ENCODE measurements at regions of chr3 and their contacts with region 1.

Region 1: DNA sequence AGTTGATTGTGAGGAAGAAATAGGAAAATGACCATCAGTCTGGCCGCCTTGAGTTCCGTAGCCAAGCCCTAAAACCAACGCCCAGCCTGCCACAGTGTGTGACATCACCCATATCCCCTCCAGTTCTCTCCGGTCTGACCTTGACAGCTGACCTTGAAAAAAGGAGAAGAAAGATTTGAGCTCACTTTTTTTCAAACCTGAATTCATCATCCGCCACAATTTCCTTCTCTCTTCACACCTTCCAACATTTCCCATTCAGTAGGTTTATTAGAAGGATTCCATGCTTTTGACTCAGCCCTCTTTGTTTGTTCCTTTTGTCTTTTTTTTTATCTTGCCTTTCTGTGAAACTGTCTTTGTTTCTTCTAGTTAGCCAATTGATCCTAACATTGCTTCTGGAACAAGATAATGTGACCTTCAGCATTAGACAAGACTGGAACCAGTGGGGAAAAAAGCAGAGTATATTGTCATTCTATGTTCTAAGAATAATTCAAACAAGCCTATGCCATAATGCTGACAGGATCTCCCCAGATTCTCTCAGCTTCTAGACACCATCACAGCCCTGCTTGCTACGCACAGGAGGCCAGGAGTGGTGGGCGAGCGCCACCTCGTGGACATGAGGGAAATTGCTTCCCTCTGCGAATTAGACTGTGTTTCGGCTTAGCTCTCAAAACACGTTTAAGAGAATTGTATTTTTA is 283.1 kb downstream of the FGF12 start:
- DNase-seq: peak; percentile 61 to 89 (median 76)
- H3K4me3 ChIP-seq: peak overlapping the region in 1 of 4 donors; percentile 5
- H3K27ac ChIP-seq: no peak overlapping the region
- H3K4me1 ChIP-seq: peaks cover 0 to 8% of the 10 kb centered on the region in 2 donors
- H3K27me3 ChIP-seq: no peaks in the 10 kb centered on the region
- CTCF ChIP-seq: peak; percentile 95 to 99 (median 98)
- POLR2A ChIP-seq: no peak

Region 2: GRCh38 chr3:191412759-191413158 is 1031.5 kb before region 1 on chr3:
- intact Hi-C with region 1: loop called in 1 of 2 experiments (anchors 10 kb)
- DNase-seq: no peak
- H3K4me3 ChIP-seq: no peak overlapping the region
- H3K27ac ChIP-seq: no peak overlapping the region
- H3K4me1 ChIP-seq: peaks cover 0 to 3% of the 10 kb centered on the region in 2 donors
- H3K27me3 ChIP-seq: no peaks in the 10 kb centered on the region
- CTCF ChIP-seq: no peak
- POLR2A ChIP-seq: no peak

Region 3: DNA sequence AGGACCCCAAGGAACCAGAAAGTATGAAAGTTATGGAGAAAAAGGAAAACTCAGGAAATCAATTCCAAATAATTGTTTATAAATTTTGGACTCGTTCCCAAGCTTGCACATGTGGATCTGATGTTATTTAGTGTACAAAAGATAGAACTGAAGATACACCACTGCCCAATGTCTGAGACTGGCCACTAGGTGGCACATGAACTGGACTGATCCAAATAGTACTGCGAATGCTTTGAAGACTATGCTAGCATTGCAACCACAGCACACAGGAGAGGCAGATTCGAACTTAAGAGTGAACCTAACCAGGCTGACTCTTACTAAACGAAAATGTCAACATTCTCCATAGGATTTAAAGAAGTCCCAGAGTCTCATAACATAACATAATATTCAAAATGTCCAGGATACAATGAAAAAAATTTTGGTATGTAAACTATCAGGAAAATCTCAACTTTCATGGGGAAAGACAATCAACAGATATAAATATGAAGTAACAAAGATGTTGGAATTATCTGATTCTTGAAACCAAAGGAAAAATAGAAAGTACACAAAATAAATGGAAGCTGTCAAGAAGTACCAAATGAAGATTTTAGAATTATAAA is 313.6 kb before region 1 on chr3:
- intact Hi-C with region 1: loop called (anchors 10 kb)
- DNase-seq: peak; percentile 53 to 86 (median 67)
- H3K4me3 ChIP-seq: no peak overlapping the region
- H3K27ac ChIP-seq: no peak overlapping the region
- H3K4me1 ChIP-seq: no peaks in the 10 kb centered on the region
- H3K27me3 ChIP-seq: no peaks in the 10 kb centered on the region
- CTCF ChIP-seq: peak; percentile 64 to 77 (median 71)
- POLR2A ChIP-seq: no peak

Region 4: DNA sequence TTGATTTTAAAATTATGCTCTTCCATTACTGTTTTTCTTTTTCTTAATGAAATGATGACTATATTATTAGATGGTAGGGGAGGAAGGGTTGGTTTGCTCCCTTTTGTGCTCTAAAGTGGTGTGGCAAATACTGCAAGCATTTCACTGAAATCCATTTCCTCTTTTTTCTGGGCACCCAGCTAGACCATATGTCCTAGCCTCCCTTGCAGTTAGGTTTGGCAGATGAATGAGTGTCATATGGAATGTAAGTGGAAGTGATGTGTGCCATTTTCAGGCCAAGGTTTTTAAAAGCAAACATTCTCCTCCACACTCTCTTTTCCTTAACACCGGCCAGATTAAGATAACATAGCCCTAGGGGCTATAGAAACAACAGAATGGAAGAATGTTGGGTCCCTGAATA is 79.9 kb before region 1 on chr3:
- intact Hi-C with region 1: no loop called
- DNase-seq: no peak
- H3K4me3 ChIP-seq: no peak overlapping the region
- H3K27ac ChIP-seq: no peak overlapping the region
- H3K4me1 ChIP-seq: peaks cover 0 to 21% of the 10 kb centered on the region in 2 donors
- H3K27me3 ChIP-seq: no peaks in the 10 kb centered on the region
- CTCF ChIP-seq: no peak
- POLR2A ChIP-seq: no peak